ENCODE measurements at regions of chr7 and their contacts with region 1.

Region 1: GRCh38 chr7:24819916-24820689 is 62.8 kb upstream of the GSDME start:
- DNase-seq: peak; percentile 66 to 89
- ATAC-seq: peak; percentile 84 to 96 (median 92)
- H3K4me3 ChIP-seq: no peak overlapping the region
- H3K27ac ChIP-seq: peak overlapping the region in 1 of 10 donors; percentile 75
- H3K4me1 ChIP-seq: peaks cover 0 to 28% (median 11%) of the 10 kb centered on the region in 9 donors
- H3K27me3 ChIP-seq: no peaks in the 10 kb centered on the region
- CTCF ChIP-seq: peak; percentile 60 to 94 (median 90)

Region 2: DNA sequence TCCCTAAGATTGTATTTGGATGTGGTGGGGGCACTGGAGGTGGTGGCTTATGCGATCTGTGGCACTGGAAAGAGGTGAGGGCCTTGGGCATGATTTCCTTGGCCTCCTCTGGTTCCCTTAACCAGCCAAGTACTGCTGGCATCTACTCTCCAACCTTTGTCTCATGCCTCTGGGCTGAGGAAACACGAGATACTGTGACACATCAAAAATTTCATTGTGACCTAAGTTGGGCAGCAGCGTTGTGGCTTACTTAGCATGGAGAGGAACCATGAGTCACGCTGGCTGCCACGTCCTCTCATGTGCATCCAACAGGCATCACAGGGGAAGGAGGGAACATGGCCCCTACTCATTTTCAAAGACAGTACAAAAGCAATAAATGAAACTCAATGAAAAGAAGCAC is 33.2 kb before region 1 on chr7:
- intact Hi-C with region 1: no loop called
- DNase-seq: peak in 1 of 2 donors; percentile 8
- ATAC-seq: peak in 5 of 8 donors; percentile 54 to 78 (median 61)
- H3K4me3 ChIP-seq: no peak overlapping the region
- H3K27ac ChIP-seq: peak overlapping the region in 1 of 10 donors; percentile 68
- H3K4me1 ChIP-seq: peaks cover 0 to 10% (median 0%) of the 10 kb centered on the region in 9 donors
- H3K27me3 ChIP-seq: no peaks in the 10 kb centered on the region
- CTCF ChIP-seq: no peak

Region 3: DNA sequence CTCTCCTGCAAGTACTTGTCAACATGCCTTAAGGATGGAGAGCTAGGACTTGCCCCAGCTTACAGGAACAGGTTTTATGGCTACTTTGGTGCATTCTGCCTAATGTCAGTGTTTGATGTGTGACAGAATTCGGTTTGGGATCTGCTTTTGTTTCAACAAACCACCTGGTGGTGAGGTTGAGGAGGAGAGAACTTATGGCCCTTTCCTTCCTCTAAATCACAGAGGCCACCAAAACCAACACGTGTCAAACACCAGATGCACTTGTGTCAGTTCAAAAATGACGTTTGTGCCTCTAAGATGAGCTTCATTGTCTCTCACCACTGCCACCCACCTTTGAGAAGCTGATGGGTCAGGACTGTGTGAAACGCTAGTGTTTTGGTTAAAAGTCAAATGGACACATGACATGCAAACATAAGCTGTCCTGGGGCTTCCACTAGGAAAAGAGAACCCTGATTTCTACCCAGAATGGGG is 76.0 kb after region 1 on chr7:
- intact Hi-C with region 1: loop called in 1 of 10 experiments (anchors 10 kb)
- DNase-seq: no peak
- ATAC-seq: no peak
- H3K4me3 ChIP-seq: no peak overlapping the region
- H3K27ac ChIP-seq: no peak overlapping the region
- H3K4me1 ChIP-seq: peaks cover 0 to 25% (median 0%) of the 10 kb centered on the region in 9 donors
- H3K27me3 ChIP-seq: no peaks in the 10 kb centered on the region
- CTCF ChIP-seq: no peak

Region 4: GRCh38 chr7:25093268-25093826 is 273.2 kb after region 1 on chr7:
- intact Hi-C with region 1: loop called in 2 of 10 experiments (anchors 5 to 10 kb)
- DNase-seq: peak; percentile 47 to 71
- ATAC-seq: peak; percentile 74 to 90 (median 84)
- H3K4me3 ChIP-seq: no peak overlapping the region
- H3K27ac ChIP-seq: no peak overlapping the region
- H3K4me1 ChIP-seq: peaks cover 0 to 6% (median 0%) of the 10 kb centered on the region in 9 donors
- H3K27me3 ChIP-seq: peaks cover 0 to 3% (median 0%) of the 10 kb centered on the region in 7 donors
- CTCF ChIP-seq: peak; percentile 60 to 88 (median 69)

Measured in heart right ventricle (tissue), 16 donors.